ENCODE measurements at regions of chr14 and their contacts with region 1.

Region 1: DNA sequence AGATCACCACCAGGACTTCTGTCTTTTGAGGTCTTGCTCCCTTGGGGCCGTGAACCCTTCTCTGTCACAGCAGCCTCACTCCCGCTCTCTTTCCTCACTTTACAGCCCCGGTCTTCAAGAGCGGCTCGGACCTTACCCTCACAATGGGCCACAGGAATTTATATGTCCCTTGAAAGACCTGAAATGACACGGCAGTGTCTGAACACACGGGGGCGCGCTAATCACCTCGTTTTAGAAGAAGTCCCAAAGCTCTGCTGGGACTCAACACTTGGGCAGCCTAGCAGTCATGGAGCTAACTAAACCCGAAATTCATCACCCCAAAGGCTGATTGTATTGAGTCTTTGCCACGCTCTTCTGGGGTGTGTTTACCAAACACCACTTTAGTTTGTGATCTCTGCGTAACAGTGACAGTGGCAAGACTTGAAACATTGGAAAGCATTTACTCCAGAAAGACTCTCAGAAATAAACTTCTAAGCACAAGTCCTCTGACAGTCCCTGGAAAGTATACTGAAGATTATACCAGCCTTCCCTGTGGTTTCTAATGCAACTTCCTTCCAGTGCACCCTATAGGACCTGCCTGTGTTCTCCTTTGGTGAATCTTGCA is 29.0 kb downstream of the SERPINA11 start:
- DNase-seq: peak in 9 of 35 experiments; percentile 1 to 16 (median 6)
- ATAC-seq: no peak
- H3K4me3 ChIP-seq: no peak overlapping the region
- H3K4me3 Mint-ChIP-seq: no peak overlapping the region
- H3K27ac ChIP-seq: no peak overlapping the region
- H3K27ac Mint-ChIP-seq: no peak overlapping the region
- H3K4me1 ChIP-seq: no peaks in the 10 kb centered on the region
- H3K4me1 Mint-ChIP-seq: no peaks in the 10 kb centered on the region
- H3K27me3 ChIP-seq: peaks cover 0 to 18% of the 10 kb centered on the region in 2 experiments
- H3K27me3 Mint-ChIP-seq: peaks cover 32 to 35% of the 10 kb centered on the region in 2 donors

Region 2: DNA sequence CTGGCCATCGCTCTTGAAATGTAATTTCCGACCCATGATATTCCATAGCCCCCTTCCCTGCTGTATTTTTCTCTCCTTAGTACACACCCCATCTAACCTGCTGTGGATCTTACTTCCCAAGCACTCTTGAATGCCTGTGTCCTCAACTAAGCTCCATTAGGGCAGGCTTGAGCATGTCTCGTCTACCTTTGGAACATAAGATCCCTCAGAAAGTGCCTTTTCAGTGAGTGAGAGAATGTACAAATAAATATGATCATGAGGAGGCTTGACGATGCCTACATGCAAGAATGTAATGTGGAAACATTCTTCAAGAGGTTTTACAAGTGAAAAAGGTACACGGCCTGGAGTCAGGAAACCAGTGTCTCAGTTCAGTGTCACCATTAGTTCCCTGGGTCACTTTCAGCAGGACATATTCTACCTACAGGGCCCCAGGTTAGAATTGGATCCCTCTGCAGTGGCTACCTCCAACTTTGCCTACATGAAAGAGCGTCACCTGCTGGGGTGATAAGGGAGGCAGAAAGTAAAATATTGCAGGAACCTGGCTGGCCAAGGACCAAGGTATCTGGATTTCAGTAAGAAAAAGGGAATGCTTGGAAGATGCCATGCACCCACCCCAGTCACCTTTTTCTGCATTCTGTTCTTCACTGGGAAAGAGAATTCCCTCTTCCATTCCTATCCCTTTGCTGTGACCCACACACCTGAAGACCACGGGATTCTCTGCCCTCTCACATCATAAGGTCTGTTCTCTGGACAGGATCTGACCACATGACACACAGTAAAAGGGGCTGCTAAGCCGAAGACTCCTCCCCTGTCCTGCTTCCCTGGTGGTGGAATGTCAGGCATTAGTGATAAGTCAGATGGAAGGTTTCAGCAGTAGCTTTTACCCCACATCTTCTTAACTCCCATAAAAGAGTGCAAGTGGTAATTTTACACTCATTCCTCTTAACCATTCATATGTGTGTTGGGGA is 10.6 kb before region 1 on chr14:
- CTCF ChIA-PET with region 1: no interaction called
- POLR2A ChIA-PET with region 1: no interaction called
- DNase-seq: no peak
- ATAC-seq: no peak
- H3K4me3 ChIP-seq: no peak overlapping the region
- H3K4me3 Mint-ChIP-seq: no peak overlapping the region
- H3K27ac ChIP-seq: no peak overlapping the region
- H3K27ac Mint-ChIP-seq: no peak overlapping the region
- H3K4me1 ChIP-seq: no peaks in the 10 kb centered on the region
- H3K4me1 Mint-ChIP-seq: no peaks in the 10 kb centered on the region
- H3K27me3 ChIP-seq: peaks cover 0 to 6% of the 10 kb centered on the region in 2 experiments
- H3K27me3 Mint-ChIP-seq: peaks cover 17 to 24% of the 10 kb centered on the region in 2 donors

Region 3: GRCh38 chr14:94581127-94581999 is 157.8 kb after region 1 on chr14 and contains the start of gene SERPINA5:
- CTCF ChIA-PET with region 1: no interaction called
- POLR2A ChIA-PET with region 1: no interaction called
- DNase-seq: no peak
- ATAC-seq: no peak
- H3K4me3 ChIP-seq: no peak within 1 kb of the TSS
- H3K4me3 Mint-ChIP-seq: no peak within 1 kb of the TSS
- H3K27ac ChIP-seq: no peak within 1 kb of the TSS
- H3K27ac Mint-ChIP-seq: no peak within 1 kb of the TSS
- H3K4me1 ChIP-seq: no peaks in the 10 kb centered on the region
- H3K4me1 Mint-ChIP-seq: no peaks in the 10 kb centered on the region
- H3K27me3 ChIP-seq: peaks cover 0 to 26% of the 10 kb centered on the region in 2 experiments
- H3K27me3 Mint-ChIP-seq: peaks cover 0 to 10% of the 10 kb centered on the region in 2 donors
- total RNA-seq, gene SERPINA5: 0.92 to 1.1 (median 0.99) TPM in 3 of 5 donors, not detected in the others

Region 4: DNA sequence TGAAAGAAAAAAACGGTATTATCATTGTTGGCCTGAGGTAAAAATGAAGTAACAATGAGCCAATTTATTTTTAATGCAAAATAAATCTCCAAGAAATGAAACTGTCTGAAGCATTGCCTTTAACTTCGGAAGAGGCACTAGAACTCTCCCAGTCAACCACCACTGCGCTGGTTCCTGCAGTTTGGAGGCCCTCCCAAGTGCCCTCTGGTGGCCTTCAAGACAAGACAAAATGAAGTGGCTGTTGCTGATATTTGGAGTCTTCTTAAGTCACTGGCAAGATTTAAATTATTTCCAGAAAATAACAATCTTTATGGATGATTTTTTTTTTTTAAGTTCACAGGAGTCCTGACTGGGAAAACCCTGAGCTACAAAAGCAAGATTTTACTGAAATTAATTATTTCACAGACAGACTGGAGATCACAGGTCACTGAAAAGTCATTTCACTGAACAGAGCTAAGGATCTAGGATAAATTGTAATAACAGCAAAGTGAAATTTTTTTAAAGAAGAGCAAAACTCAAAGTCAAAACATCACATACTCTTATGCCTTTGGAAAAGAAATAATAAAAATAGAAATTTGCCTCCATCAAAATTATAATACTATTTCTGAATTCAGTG is 675.5 kb after region 1 on chr14:
- CTCF ChIA-PET with region 1: no interaction called
- POLR2A ChIA-PET with region 1: no interaction called
- DNase-seq: peak in 30 of 35 experiments; percentile 5 to 57 (median 18)
- ATAC-seq: peak in 2 of 4 experiments; percentile 50 to 60
- H3K4me3 ChIP-seq: no peak overlapping the region
- H3K4me3 Mint-ChIP-seq: no peak overlapping the region
- H3K27ac ChIP-seq: no peak overlapping the region
- H3K27ac Mint-ChIP-seq: peak overlapping the region in 1 of 2 donors; percentile 28
- H3K4me1 ChIP-seq: no peaks in the 10 kb centered on the region
- H3K4me1 Mint-ChIP-seq: peaks cover 27 to 34% (median 30%) of the 10 kb centered on the region in 3 donors
- H3K27me3 ChIP-seq: no peaks in the 10 kb centered on the region
- H3K27me3 Mint-ChIP-seq: no peaks in the 10 kb centered on the region

Region 5: DNA sequence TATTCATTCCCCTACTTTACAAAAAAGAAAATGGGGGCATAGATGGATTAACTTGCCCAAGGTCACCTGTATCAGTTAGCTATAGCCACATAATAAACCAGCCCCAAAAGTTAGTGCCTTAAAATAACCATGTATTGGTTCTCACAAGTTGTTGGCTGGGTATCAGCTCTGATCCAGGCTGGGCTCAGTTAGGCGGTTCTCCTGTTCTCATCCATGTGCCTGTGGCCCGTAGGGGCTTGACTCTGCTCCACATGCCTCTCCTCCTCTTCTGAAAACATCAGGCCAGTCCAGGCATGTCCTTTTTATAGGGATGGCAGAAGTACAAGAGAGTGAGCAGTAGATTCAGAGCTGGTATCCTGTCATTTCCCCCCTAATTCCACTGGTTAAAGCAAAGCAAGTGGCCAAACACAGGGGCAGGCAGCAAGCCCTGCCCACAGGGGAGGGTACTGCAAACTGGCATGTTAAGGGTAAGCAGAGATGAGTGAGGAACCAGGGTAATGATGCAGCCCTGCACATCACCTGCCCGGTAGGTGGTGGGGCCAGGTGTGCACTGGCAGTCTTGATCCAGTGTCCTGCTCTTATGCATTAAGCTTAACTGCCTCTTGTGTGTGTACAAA is 1405.2 kb after region 1 on chr14:
- CTCF ChIA-PET with region 1: no interaction called
- POLR2A ChIA-PET with region 1: interaction called in 1 of 2 experiments, 12 read pairs
- DNase-seq: no peak
- ATAC-seq: no peak
- H3K4me3 ChIP-seq: no peak overlapping the region
- H3K4me3 Mint-ChIP-seq: no peak overlapping the region
- H3K27ac ChIP-seq: no peak overlapping the region
- H3K27ac Mint-ChIP-seq: no peak overlapping the region
- H3K4me1 ChIP-seq: no peaks in the 10 kb centered on the region
- H3K4me1 Mint-ChIP-seq: no peaks in the 10 kb centered on the region
- H3K27me3 ChIP-seq: peaks cover 2 to 23% of the 10 kb centered on the region in 2 experiments
- H3K27me3 Mint-ChIP-seq: peaks cover 22 to 35% of the 10 kb centered on the region in 2 donors